T-cell (primary cell): ENCODE measurements at regions of chr6 and their contacts with region 1.

Region 1: GRCh38 chr6:117591405-117591804 is 10.9 kb downstream of the GOPC start:
- DNase-seq: no peak
- ATAC-seq: no peak
- H3K4me3 ChIP-seq: no peak overlapping the region
- H3K4me3 Mint-ChIP-seq: no peak overlapping the region
- H3K27ac ChIP-seq: no peak overlapping the region
- H3K27ac Mint-ChIP-seq: no peak overlapping the region
- H3K4me1 ChIP-seq: no peaks in the 10 kb centered on the region
- H3K4me1 Mint-ChIP-seq: peaks cover 21 to 32% (median 26%) of the 10 kb centered on the region in 3 donors
- H3K27me3 ChIP-seq: no peaks in the 10 kb centered on the region
- H3K27me3 Mint-ChIP-seq: no peaks in the 10 kb centered on the region

Region 2: GRCh38 chr6:117602151-117602898 is 10.9 kb after region 1 on chr6 and contains the start of gene GOPC:
- CTCF ChIA-PET with region 1: interaction called, 6 to 12 read pairs
- POLR2A ChIA-PET with region 1: interaction called in 1 of 2 experiments, 4 read pairs
- DNase-seq: peak; percentile 83 to 99 (median 94)
- ATAC-seq: peak; percentile 95 to 97 (median 96)
- H3K4me3 ChIP-seq: peak within 1 kb of the TSS; percentile 90 to 100
- H3K4me3 Mint-ChIP-seq: peak within 1 kb of the TSS; percentile 94 to 100 (median 98)
- H3K27ac ChIP-seq: peak within 1 kb of the TSS; percentile 83
- H3K27ac Mint-ChIP-seq: peak within 1 kb of the TSS; percentile 99
- H3K4me1 ChIP-seq: peaks cover 17 to 25% of the 10 kb centered on the region in 2 experiments
- H3K4me1 Mint-ChIP-seq: peaks cover 44 to 51% (median 49%) of the 10 kb centered on the region in 3 donors
- H3K27me3 ChIP-seq: no peaks in the 10 kb centered on the region
- H3K27me3 Mint-ChIP-seq: peaks cover 0 to under 1% of the 10 kb centered on the region in 2 donors
- total RNA-seq, gene GOPC: 20.8 to 30.2 (median 27.5) TPM

Region 3: DNA sequence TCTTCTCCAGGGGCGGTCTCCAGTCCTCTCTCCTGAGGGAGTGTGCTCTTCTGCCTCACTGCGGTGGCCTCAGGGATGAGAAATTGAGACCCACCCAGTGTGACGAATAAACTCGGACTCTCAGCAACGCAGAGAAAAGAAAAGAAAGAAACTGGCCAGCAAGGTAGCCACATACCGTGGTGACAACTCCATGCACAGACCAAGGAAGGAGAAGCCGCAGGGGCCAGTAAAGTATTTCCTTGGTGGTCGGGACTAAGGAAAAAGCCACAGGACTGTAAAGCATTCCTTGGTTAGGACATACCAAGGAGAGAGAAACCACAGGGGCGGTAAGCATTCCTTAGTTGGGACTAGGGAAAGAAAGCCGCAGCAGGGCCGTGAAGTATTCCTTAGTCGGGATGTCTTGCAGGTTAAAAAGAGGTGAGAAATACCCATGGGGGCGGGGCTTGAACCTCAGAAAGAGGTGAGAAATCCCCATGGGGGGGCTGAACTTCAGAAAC is 24.5 kb after region 1 on chr6:
- CTCF ChIA-PET with region 1: no interaction called
- POLR2A ChIA-PET with region 1: no interaction called
- DNase-seq: peak in 1 of 35 experiments; percentile 2
- ATAC-seq: peak in 1 of 4 experiments; percentile 36
- H3K4me3 ChIP-seq: no peak overlapping the region
- H3K4me3 Mint-ChIP-seq: no peak overlapping the region
- H3K27ac ChIP-seq: peak overlapping the region; percentile 82
- H3K27ac Mint-ChIP-seq: peak overlapping the region in 1 of 2 donors; percentile 46
- H3K4me1 ChIP-seq: peaks cover 2 to 26% of the 10 kb centered on the region in 2 experiments
- H3K4me1 Mint-ChIP-seq: peaks cover 20 to 32% (median 26%) of the 10 kb centered on the region in 3 donors
- H3K27me3 ChIP-seq: no peaks in the 10 kb centered on the region
- H3K27me3 Mint-ChIP-seq: peaks cover 4 to 10% of the 10 kb centered on the region in 2 donors